GM12878 (cell line): ENCODE measurements at regions of chr7 and their contacts with region 1.

Region 1: GRCh38 chr7:151110941-151111645 is 24.8 kb downstream of the AGAP3 start:
- DNase-seq: no peak
- ATAC-seq: peak; percentile 100
- H3K4me3 ChIP-seq: no peak overlapping the region
- H3K27ac ChIP-seq: no peak overlapping the region
- H3K4me1 ChIP-seq: no peaks in the 10 kb centered on the region
- H3K27me3 ChIP-seq: no peaks in the 10 kb centered on the region
- CTCF ChIP-seq: peak; percentile 86 to 93 (median 92)
- EP300 ChIP-seq: no peak
- POLR2A ChIP-seq: no peak
- RAD21 ChIP-seq: peak; percentile 88

Region 2: GRCh38 chr7:150766334-150766709 is 344.8 kb before region 1 on chr7:
- CTCF ChIA-PET with region 1: no interaction called
- POLR2A ChIA-PET with region 1: no interaction called
- RAD21 ChIA-PET with region 1: no interaction called
- SMC1A ChIA-PET with region 1: no interaction called
- in situ Hi-C with region 1: no loop called
- intact Hi-C with region 1: no loop called
- DNase-seq: no peak
- ATAC-seq: no peak
- H3K4me3 ChIP-seq: no peak overlapping the region
- H3K27ac ChIP-seq: no peak overlapping the region
- H3K4me1 ChIP-seq: no peaks in the 10 kb centered on the region
- H3K27me3 ChIP-seq: no peaks in the 10 kb centered on the region
- CTCF ChIP-seq: no peak
- EP300 ChIP-seq: no peak
- POLR2A ChIP-seq: no peak
- RAD21 ChIP-seq: no peak

Region 3: GRCh38 chr7:151017953-151018420 is 93.1 kb before region 1 on chr7:
- CTCF ChIA-PET with region 1: interaction called, 3 read pairs
- POLR2A ChIA-PET with region 1: no interaction called
- RAD21 ChIA-PET with region 1: interaction called, 3 read pairs
- SMC1A ChIA-PET with region 1: no interaction called
- in situ Hi-C with region 1: no loop called
- intact Hi-C with region 1: loop called (anchors 5 kb)
- DNase-seq: no peak
- ATAC-seq: peak; percentile 84
- H3K4me3 ChIP-seq: no peak overlapping the region
- H3K27ac ChIP-seq: no peak overlapping the region
- H3K4me1 ChIP-seq: peaks cover 9% of the 10 kb centered on the region
- H3K27me3 ChIP-seq: peaks cover 8 to 10% of the 10 kb centered on the region in 2 experiments; a peak in 3 of 4 replicates
- CTCF ChIP-seq: peak; percentile 83 to 97 (median 88)
- EP300 ChIP-seq: no peak
- POLR2A ChIP-seq: no peak
- RAD21 ChIP-seq: peak; percentile 49

Region 4: GRCh38 chr7:151057989-151058780 is 52.9 kb before region 1 on chr7:
- CTCF ChIA-PET with region 1: interaction called, 5 read pairs
- POLR2A ChIA-PET with region 1: no interaction called
- RAD21 ChIA-PET with region 1: interaction called, 4 read pairs
- SMC1A ChIA-PET with region 1: no interaction called
- in situ Hi-C with region 1: no loop called
- intact Hi-C with region 1: loop called (anchors 2 kb)
- DNase-seq: peak; percentile 95
- ATAC-seq: peak; percentile 93
- H3K4me3 ChIP-seq: peak overlapping the region; percentile 99
- H3K27ac ChIP-seq: peak overlapping the region; percentile 88
- H3K4me1 ChIP-seq: peaks cover 24% of the 10 kb centered on the region
- H3K27me3 ChIP-seq: no peaks in the 10 kb centered on the region
- CTCF ChIP-seq: no peak
- EP300 ChIP-seq: peak in 1 of 2 experiments; percentile 8; a peak in 1 of 4 replicates
- POLR2A ChIP-seq: peak; percentile 73
- RAD21 ChIP-seq: no peak

Region 5: GRCh38 chr7:151074817-151075643 is 36.1 kb before region 1 on chr7:
- CTCF ChIA-PET with region 1: no interaction called
- POLR2A ChIA-PET with region 1: no interaction called
- RAD21 ChIA-PET with region 1: no interaction called
- SMC1A ChIA-PET with region 1: no interaction called
- in situ Hi-C with region 1: no loop called
- intact Hi-C with region 1: no loop called
- DNase-seq: no peak
- ATAC-seq: no peak
- H3K4me3 ChIP-seq: no peak overlapping the region
- H3K27ac ChIP-seq: no peak overlapping the region
- H3K4me1 ChIP-seq: peaks cover 8% of the 10 kb centered on the region
- H3K27me3 ChIP-seq: no peaks in the 10 kb centered on the region
- CTCF ChIP-seq: no peak
- EP300 ChIP-seq: no peak
- POLR2A ChIP-seq: no peak; the same call in 1 of the 2 replicates
- RAD21 ChIP-seq: no peak

Region 6: DNA sequence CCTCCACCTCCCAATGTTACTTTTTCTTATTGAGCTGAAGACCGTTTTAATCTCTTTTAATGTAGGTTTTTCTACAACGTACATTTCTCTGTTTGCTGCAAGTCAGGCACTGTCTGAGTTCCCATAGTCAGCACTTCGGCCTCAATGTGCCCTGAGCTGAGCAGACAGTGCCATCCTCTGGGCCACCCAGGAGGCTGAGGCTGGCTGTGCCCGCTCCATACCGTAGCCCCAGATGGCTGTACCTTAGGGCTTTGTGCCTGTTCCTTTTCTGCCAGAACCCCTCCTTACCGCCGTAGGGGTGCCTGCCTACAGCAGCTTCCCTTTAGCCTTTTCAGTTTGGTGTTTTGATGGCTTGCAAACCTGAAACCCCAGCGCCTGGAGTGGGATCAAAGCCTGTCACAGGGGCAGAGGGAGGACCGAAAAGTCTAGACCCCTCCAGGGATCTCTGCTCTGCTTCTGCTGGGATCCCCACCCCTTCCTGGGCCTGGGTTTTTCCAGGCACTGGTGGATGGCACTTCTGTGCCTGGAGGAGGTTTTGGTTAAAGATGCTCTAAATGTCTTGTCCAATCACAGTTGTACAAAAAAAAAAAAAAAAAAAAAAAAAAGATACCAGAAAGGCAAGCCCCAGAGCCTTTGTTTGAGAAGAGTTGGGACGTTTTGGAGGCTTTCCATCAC is 15.8 kb before region 1 on chr7:
- CTCF ChIA-PET with region 1: interaction called, 19 read pairs
- POLR2A ChIA-PET with region 1: interaction called, 3 read pairs
- RAD21 ChIA-PET with region 1: interaction called, 3 read pairs
- SMC1A ChIA-PET with region 1: interaction called, 3 read pairs
- in situ Hi-C with region 1: no loop called
- intact Hi-C with region 1: no loop called
- DNase-seq: no peak
- ATAC-seq: 0 out of 3 replicates have a peak, but pooled peaks have one; percentile 25
- H3K4me3 ChIP-seq: no peak overlapping the region
- H3K27ac ChIP-seq: no peak overlapping the region
- H3K4me1 ChIP-seq: no peaks in the 10 kb centered on the region; the same call in 1 of the 2 replicates
- H3K27me3 ChIP-seq: no peaks in the 10 kb centered on the region
- CTCF ChIP-seq: no peak
- EP300 ChIP-seq: no peak
- POLR2A ChIP-seq: no peak
- RAD21 ChIP-seq: no peak

Region 7: GRCh38 chr7:151248346-151249033 is 137.4 kb after region 1 on chr7 and contains the start of gene SMARCD3:
- CTCF ChIA-PET with region 1: no interaction called
- POLR2A ChIA-PET with region 1: no interaction called
- RAD21 ChIA-PET with region 1: no interaction called
- SMC1A ChIA-PET with region 1: no interaction called
- in situ Hi-C with region 1: no loop called
- intact Hi-C with region 1: no loop called
- DNase-seq: no peak
- ATAC-seq: no peak
- H3K4me3 ChIP-seq: no peak within 1 kb of the TSS
- H3K27ac ChIP-seq: no peak within 1 kb of the TSS
- H3K4me1 ChIP-seq: peaks cover 12% of the 10 kb centered on the region
- H3K27me3 ChIP-seq: peaks cover 22 to 35% of the 10 kb centered on the region in 2 experiments
- CTCF ChIP-seq: no peak
- EP300 ChIP-seq: no peak
- POLR2A ChIP-seq: no peak
- RAD21 ChIP-seq: no peak
- polyA plus RNA-seq, gene SMARCD3: 0.11 TPM